CD8-positive, alpha-beta memory T cell (primary cell): ENCODE measurements at regions of chr11 and their contacts with region 1.

Region 1: DNA sequence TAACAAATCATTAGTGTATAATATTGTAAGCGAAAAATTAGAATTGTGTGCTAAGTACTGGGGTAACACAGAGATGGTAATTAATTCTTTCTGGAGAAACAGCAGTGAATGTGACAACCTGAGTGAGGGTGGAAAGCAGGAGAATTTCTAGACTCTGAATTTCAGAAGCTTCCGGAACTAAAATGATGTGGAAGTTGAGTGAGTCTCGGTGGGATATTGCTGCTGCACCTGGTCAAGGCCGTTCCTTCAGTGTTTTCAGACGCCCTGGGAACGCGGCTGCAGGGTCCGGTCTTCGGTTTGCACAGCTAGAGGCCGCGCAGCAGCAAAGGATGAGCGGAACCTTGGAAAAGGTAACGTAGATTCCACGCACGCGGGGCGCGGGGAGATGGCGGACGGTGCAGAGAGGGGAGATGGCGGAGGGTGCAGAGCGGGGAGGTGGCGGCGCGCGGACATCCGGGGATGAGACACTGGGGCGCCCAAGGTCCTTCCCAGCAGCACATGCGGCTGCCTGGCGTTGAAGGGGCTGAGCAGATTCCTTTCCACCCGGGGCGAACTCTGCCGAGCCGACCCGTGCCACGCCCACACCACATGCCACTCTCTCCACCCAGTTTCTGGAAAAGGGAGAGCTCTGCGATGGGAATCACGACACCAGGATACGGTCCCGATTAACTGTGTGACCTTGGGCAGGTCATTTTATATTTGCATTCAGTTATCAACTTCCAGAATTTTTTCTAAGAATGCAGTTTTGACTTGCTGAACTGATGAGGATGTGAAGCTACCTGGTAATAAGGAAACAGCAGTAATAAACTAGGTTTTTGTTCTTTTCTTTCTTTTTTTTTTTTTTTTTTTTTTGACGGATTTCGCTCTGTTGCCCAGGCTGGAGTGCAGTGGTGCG is at the start of gene MRPL48:
- DNase-seq: peak; percentile 73 to 89 (median 84)
- H3K4me3 ChIP-seq: peak within 1 kb of the TSS; percentile 97
- H3K4me3 Mint-ChIP-seq: peak within 1 kb of the TSS; percentile 94 to 100 (median 99)
- H3K27ac ChIP-seq: peak within 1 kb of the TSS; percentile 86
- H3K27ac Mint-ChIP-seq: peak within 1 kb of the TSS; percentile 94 to 99 (median 98)
- H3K4me1 ChIP-seq: peaks cover 12% of the 10 kb centered on the region
- H3K4me1 Mint-ChIP-seq: peaks cover 16 to 40% (median 39%) of the 10 kb centered on the region in 3 donors
- H3K27me3 ChIP-seq: no peaks in the 10 kb centered on the region
- H3K27me3 Mint-ChIP-seq: no peaks in the 10 kb centered on the region
- total RNA-seq, gene MRPL48: 63.1 to 66.7 TPM

Region 2: DNA sequence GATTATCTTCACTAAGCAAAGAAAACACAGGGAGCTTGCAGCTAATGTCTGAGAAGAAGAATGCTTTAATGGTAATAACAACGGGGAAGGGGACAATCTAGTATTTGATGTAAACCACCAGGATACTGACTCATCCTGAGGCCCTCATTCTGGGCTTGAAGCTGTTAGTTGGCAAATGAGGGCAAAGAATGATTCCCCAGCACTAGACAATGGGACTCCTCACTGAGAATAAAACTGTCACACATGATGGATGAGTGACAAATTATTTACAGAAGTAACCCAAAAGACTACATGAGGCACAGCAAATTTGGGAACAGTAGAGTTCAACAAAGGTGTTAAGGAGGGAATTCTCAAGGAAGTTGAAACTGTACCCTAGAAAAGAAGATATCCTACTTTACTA is 266.3 kb before region 1 on chr11:
- CTCF ChIA-PET with region 1: no interaction called
- POLR2A ChIA-PET with region 1: no interaction called
- DNase-seq: no peak
- H3K4me3 ChIP-seq: no peak overlapping the region
- H3K4me3 Mint-ChIP-seq: no peak overlapping the region
- H3K27ac ChIP-seq: no peak overlapping the region
- H3K27ac Mint-ChIP-seq: peak overlapping the region in 1 of 8 donors; percentile 52
- H3K4me1 ChIP-seq: peaks cover 17% of the 10 kb centered on the region
- H3K4me1 Mint-ChIP-seq: peaks cover 18 to 28% (median 19%) of the 10 kb centered on the region in 3 donors
- H3K27me3 ChIP-seq: no peaks in the 10 kb centered on the region
- H3K27me3 Mint-ChIP-seq: no peaks in the 10 kb centered on the region

Region 3: GRCh38 chr11:73661035-73661628 is 126.8 kb before region 1 on chr11:
- CTCF ChIA-PET with region 1: no interaction called
- POLR2A ChIA-PET with region 1: no interaction called
- DNase-seq: peak; percentile 71 to 85 (median 78)
- H3K4me3 ChIP-seq: no peak overlapping the region
- H3K4me3 Mint-ChIP-seq: peak overlapping the region in 3 of 7 donors; percentile 42 to 61 (median 48)
- H3K27ac ChIP-seq: no peak overlapping the region
- H3K27ac Mint-ChIP-seq: no peak overlapping the region
- H3K4me1 ChIP-seq: peaks cover 7% of the 10 kb centered on the region
- H3K4me1 Mint-ChIP-seq: peaks cover 7 to 13% (median 8%) of the 10 kb centered on the region in 3 donors
- H3K27me3 ChIP-seq: no peaks in the 10 kb centered on the region
- H3K27me3 Mint-ChIP-seq: peaks cover 0 to 3% of the 10 kb centered on the region in 2 donors

Region 4: DNA sequence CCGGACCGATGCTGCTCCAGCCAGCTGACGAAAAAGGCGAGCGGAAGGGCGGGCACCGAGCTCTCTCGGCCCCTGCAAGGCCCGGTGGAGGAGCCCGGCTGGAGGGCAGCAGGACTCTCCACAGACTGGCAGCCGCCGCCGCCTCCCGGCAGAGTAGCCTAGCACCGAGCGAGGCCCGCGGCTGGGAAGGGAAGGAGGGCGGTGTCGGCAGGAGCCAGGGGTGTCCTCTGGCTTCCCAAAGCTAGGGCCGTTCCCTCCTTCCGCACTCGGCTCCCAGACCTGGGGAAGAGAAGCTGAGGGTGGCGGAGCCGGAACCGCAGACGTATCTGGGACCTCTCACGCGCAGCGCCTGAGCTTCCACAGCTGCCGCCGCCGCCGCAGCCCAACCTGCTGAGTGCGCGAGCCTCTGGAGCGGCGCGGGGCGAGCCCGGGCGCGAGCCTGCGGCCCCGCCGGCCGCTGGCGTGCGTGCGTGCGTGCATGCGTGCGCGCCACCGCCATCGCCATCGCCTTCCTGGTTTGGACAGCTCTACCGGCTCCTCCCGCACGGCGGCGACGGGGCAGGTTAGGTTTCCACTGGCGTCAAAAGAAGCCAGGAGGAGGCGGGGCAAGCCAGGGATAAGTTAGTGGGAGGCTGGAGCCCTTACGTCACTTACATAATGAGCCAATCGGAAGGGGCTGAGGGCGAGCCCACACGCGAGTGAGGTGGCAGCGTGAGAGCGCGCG is 27.0 kb before region 1 on chr11 and contains the start of gene RAB6A:
- CTCF ChIA-PET with region 1: interaction called, 5 read pairs
- POLR2A ChIA-PET with region 1: interaction called, 11 read pairs
- DNase-seq: peak; percentile 99 to 100 (median 100)
- H3K4me3 ChIP-seq: peak within 1 kb of the TSS; percentile 83
- H3K4me3 Mint-ChIP-seq: peak within 1 kb of the TSS; percentile 78 to 94 (median 90)
- H3K27ac ChIP-seq: peak within 1 kb of the TSS; percentile 87
- H3K27ac Mint-ChIP-seq: peak within 1 kb of the TSS; percentile 85 to 98 (median 90)
- H3K4me1 ChIP-seq: peaks cover 31% of the 10 kb centered on the region
- H3K4me1 Mint-ChIP-seq: peaks cover 32 to 45% (median 45%) of the 10 kb centered on the region in 3 donors
- H3K27me3 ChIP-seq: no peaks in the 10 kb centered on the region
- H3K27me3 Mint-ChIP-seq: peaks cover 0 to 3% of the 10 kb centered on the region in 2 donors
- total RNA-seq, gene RAB6A: 66.9 to 69.9 TPM

Region 5: GRCh38 chr11:73866586-73866996 is 78.7 kb after region 1 on chr11:
- CTCF ChIA-PET with region 1: no interaction called
- POLR2A ChIA-PET with region 1: no interaction called
- DNase-seq: no peak
- H3K4me3 ChIP-seq: no peak overlapping the region
- H3K4me3 Mint-ChIP-seq: no peak overlapping the region
- H3K27ac ChIP-seq: no peak overlapping the region
- H3K27ac Mint-ChIP-seq: no peak overlapping the region
- H3K4me1 ChIP-seq: no peaks in the 10 kb centered on the region
- H3K4me1 Mint-ChIP-seq: no peaks in the 10 kb centered on the region
- H3K27me3 ChIP-seq: no peaks in the 10 kb centered on the region
- H3K27me3 Mint-ChIP-seq: no peaks in the 10 kb centered on the region

Region 6: GRCh38 chr11:74011360-74012073 is 223.6 kb after region 1 on chr11:
- CTCF ChIA-PET with region 1: no interaction called
- POLR2A ChIA-PET with region 1: no interaction called
- DNase-seq: peak in 2 of 5 donors; percentile 20 to 59
- H3K4me3 ChIP-seq: peak overlapping the region; percentile 38
- H3K4me3 Mint-ChIP-seq: peak overlapping the region; percentile 7 to 84 (median 57)
- H3K27ac ChIP-seq: peak overlapping the region; percentile 54
- H3K27ac Mint-ChIP-seq: peak overlapping the region; percentile 84 to 98 (median 91)
- H3K4me1 ChIP-seq: peaks cover 97% of the 10 kb centered on the region
- H3K4me1 Mint-ChIP-seq: peaks cover 76 to 95% (median 90%) of the 10 kb centered on the region in 3 donors
- H3K27me3 ChIP-seq: no peaks in the 10 kb centered on the region
- H3K27me3 Mint-ChIP-seq: peaks cover 0 to 2% of the 10 kb centered on the region in 2 donors

Region 7: DNA sequence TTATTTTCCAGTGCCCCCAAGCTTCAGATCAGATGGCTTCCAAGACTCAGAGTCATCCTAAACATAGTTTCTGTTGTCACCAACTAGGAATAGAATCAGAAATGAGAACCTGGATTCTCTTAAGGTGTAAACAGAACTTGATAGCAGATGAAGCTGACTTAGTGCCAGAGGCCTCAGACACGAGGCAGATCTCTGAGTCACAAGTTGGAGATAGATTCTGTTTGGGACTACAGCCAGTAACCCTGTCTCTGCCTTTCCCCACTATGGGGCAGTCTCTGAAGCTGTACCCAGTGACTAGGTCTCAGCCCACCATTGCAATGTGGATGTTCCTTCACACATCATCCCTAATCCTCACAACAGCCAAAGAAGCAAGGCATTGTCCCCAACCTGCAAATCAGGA is 1226.2 kb after region 1 on chr11:
- CTCF ChIA-PET with region 1: no interaction called
- POLR2A ChIA-PET with region 1: interaction called, 19 read pairs
- DNase-seq: no peak
- H3K4me3 ChIP-seq: no peak overlapping the region
- H3K4me3 Mint-ChIP-seq: no peak overlapping the region
- H3K27ac ChIP-seq: no peak overlapping the region
- H3K27ac Mint-ChIP-seq: no peak overlapping the region
- H3K4me1 ChIP-seq: no peaks in the 10 kb centered on the region
- H3K4me1 Mint-ChIP-seq: no peaks in the 10 kb centered on the region
- H3K27me3 ChIP-seq: no peaks in the 10 kb centered on the region
- H3K27me3 Mint-ChIP-seq: no peaks in the 10 kb centered on the region